ENCODE measurements at regions of chr2 and their contacts with region 1.

Region 1: DNA sequence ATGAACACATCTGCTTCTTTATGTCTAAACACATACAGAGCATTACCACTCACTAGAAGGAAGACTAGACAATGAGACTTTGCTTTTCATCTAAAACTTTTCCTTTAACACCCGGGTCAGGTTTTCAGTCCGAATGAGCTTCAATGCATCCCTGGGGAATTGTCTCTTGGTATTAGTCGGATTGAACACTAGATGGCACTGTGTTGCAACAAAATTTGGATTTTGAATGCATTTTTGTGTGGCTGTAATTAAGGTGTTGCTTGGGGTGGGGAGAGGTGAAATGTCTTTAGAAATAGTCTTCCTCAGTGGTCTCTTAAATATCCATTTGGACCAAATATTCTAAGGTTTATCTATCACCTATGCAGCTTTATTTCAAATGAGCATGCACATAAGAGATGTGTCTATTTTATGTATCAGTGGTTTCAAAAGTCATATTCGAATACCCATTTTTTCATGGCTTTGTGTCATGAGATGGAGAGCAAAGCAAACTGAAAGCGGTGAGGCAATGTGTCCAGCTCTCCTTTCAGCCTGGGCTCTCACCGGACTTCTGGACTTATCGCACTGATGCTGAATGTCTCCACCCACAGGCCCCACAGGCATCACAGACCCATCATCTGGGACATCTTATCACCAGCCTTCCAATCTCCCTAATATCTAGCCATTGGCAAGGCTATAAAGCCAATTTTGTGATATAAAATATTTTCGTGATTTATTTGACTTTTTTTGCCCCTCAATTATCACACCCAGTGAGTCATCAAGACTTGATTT is 510.3 kb downstream of the RNF144A start:
- DNase-seq: peak; percentile 86
- H3K4me3 Mint-ChIP-seq: peak overlapping the region; percentile 27
- H3K27ac Mint-ChIP-seq: peak overlapping the region; percentile 83
- H3K4me1 Mint-ChIP-seq: peaks cover 42% of the 10 kb centered on the region
- H3K27me3 Mint-ChIP-seq: no peaks in the 10 kb centered on the region

Region 2: DNA sequence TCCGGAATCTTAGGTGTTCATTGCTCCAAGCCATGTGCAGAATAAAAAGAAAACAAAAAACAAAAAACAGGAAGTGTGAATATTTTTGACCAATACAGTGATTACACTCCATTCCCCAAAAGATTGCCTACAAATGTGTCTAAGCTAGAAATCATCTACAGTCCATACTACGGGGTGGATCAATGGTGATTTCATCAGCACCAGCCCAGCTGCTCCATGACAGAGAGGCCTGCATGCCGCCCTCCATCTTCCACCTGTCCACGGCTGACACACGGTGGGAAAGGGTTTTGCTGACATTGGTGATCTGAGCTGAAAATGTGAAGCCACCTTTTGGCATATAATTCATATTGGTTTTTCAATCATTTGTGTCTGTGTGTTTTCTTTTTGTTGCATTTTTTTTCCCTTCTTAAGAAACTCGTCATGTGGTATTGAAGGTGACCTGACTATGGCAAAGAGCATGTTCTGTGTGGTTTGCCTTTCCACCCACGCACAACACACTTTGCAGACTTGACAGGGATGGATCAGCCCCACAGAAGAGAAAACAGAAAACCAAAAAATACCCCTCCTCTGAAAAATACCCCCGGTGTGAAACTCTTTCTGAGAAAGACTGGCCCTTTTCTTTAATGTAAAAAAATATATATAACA is 22.8 kb after region 1 on chr2:
- intact Hi-C with region 1: loop called (anchors 1 kb)
- DNase-seq: peak; percentile 90
- H3K4me3 Mint-ChIP-seq: peak overlapping the region; percentile 58
- H3K27ac Mint-ChIP-seq: peak overlapping the region; percentile 100
- H3K4me1 Mint-ChIP-seq: peaks cover 70% of the 10 kb centered on the region
- H3K27me3 Mint-ChIP-seq: no peaks in the 10 kb centered on the region

Region 3: GRCh38 chr2:7725171-7725849 is 297.8 kb after region 1 on chr2:
- intact Hi-C with region 1: loop called (anchors 2 kb)
- DNase-seq: peak; percentile 88
- H3K4me3 Mint-ChIP-seq: peak overlapping the region; percentile 87
- H3K27ac Mint-ChIP-seq: peak overlapping the region; percentile 92
- H3K4me1 Mint-ChIP-seq: peaks cover 53% of the 10 kb centered on the region
- H3K27me3 Mint-ChIP-seq: no peaks in the 10 kb centered on the region

Region 4: GRCh38 chr2:8169443-8169842 is 742.0 kb after region 1 on chr2:
- intact Hi-C with region 1: loop called (anchors 5 kb)
- DNase-seq: no peak
- H3K4me3 Mint-ChIP-seq: no peak overlapping the region
- H3K27ac Mint-ChIP-seq: no peak overlapping the region
- H3K4me1 Mint-ChIP-seq: peaks cover 10% of the 10 kb centered on the region
- H3K27me3 Mint-ChIP-seq: no peaks in the 10 kb centered on the region

Region 5: GRCh38 chr2:8477552-8478470 is 1050.3 kb after region 1 on chr2:
- intact Hi-C with region 1: loop called (anchors 10 kb)
- DNase-seq: peak; percentile 76
- H3K4me3 Mint-ChIP-seq: peak overlapping the region; percentile 53
- H3K27ac Mint-ChIP-seq: peak overlapping the region; percentile 84
- H3K4me1 Mint-ChIP-seq: peaks cover 84% of the 10 kb centered on the region
- H3K27me3 Mint-ChIP-seq: no peaks in the 10 kb centered on the region

Region 6: DNA sequence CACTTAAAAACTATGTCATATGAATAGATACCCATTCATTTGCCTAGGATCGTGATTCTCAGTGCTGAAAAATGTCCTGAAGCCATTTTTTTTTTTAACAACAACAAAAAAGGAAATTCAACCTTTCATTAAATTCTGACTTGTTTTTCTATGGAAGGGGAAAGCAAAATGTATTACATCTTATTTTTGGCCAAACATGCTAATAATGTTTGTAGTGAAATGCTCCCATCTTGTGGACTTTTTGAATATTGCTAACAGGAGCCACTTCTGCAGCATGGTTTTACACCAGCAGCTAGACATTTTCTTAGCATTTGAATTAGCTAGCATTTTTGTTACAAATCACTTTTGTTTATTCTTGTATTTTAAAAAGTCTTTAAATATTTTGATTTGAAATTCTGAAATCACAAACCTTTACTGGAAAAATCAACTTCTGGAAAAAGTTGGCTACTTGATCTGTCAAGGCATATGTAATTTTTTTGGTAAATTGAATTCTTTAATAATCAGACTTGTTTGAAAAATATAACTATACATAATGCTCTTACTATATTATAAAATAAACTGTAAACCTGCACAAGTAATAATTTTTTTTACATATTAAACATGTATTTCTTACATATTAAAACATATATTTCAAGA is 1334.2 kb after region 1 on chr2:
- intact Hi-C with region 1: loop called (anchors 10 kb)
- DNase-seq: no peak
- H3K4me3 Mint-ChIP-seq: no peak overlapping the region
- H3K27ac Mint-ChIP-seq: no peak overlapping the region
- H3K4me1 Mint-ChIP-seq: no peaks in the 10 kb centered on the region
- H3K27me3 Mint-ChIP-seq: no peaks in the 10 kb centered on the region